Calu3 (cell line): ENCODE measurements at regions of chr6 and their contacts with region 1.

Region 1: DNA sequence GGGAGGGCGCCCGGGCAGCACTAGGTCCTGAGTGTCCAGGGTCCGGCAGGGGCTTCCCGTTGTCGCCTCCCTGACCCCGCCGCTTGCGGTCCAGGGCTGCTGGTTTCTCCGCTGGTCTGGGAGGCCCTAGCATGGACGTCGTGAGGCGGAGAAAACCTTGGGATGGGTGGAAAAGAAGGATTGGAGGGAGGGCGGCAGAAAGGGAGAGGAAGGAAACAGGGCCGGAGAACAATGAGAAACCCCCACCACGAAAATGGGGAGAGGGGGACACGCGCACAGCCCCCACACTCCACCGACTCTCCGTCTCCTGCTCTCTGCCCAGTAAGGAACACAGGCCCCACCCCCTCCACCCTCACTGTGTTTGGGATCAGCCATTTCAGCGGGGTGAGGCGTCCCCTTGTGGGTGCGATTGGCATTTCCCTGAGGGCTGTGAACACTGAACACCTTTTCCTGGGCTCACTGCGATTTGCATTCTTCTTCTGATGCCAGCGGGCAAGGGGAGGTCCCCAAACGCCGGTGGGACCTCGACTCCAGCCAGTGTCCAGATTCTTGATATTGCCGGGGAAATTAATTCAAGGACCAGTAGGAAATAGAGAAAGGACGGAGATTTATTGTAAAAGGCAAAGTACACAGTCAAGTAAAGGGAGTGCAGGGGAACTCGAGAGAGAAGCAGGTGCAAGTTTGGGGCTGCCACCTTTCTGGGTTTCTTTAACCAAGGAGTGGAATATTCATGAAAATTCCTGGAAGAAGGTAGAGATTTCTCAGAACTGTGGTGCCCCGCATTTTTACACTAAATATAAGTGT is 3.3 kb upstream of the RAET1G start:
- DNase-seq: peak; percentile 91
- H3K4me3 Mint-ChIP-seq: peak overlapping the region; percentile 67
- H3K27ac Mint-ChIP-seq: no peak overlapping the region
- H3K4me1 Mint-ChIP-seq: peaks cover 7% of the 10 kb centered on the region
- H3K27me3 Mint-ChIP-seq: peaks cover 35% of the 10 kb centered on the region
- CTCF ChIP-seq: peak; percentile 66

Region 2: DNA sequence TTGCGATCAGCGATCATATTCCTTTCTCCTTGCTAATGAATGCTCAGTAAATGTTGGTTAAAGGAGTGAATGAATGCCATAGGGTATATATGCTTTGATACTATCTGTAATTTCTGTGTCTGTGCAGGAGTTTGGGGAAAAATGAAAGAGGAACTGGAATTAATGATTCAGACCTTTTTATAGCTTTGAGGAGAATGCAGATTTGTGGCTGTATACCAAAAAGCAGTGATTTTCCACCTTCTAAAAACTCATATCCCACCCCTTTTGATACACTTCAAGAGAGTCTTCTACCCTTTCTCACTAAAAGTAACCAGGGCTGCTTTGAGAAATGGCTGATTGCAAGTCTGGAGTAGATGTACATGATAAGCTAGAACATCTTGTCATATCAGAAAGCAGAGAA is 552.7 kb before region 1 on chr6:
- CTCF ChIA-PET with region 1: no interaction called
- intact Hi-C with region 1: no loop called
- DNase-seq: no peak
- H3K4me3 Mint-ChIP-seq: no peak overlapping the region
- H3K27ac Mint-ChIP-seq: no peak overlapping the region
- H3K4me1 Mint-ChIP-seq: peaks cover 8% of the 10 kb centered on the region
- H3K27me3 Mint-ChIP-seq: no peaks in the 10 kb centered on the region
- CTCF ChIP-seq: no peak

Region 3: DNA sequence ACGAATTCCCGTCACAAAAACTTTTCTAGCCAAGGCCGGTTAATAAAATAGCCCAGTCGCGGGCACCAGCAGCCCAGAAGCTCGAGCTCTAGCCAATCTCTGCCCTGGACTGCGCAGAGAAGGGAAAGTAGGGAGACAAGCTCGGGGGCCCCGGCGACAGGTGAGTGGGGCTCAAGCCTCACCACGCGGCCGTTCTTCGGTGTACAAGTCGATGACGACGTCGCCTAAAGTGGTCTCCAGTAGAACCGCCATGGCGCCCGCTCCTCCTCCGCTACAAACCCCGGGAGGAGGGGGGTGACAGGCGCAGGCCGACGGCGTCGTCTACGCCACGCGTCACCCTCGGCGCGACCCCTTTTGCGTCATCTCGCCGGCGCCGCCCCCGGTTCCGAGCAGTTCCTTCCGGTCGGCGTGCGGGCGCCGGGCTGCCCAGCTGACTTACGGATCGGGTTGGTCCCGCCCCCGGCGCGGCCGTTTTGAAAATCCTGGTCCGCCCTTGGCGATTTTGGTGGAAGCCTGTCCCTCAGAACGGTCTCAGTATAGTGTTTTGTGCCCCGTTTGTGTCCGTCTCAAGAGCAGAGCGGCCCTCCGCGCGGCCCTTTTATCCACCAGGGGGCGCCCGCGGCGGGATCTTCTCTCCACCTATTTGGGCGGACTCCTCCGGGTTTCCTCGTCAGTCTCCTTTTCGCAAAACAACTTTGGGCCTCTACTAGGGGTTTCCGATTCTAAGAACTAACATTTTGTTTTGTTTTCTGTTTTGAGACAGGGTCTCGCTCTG is 380.2 kb before region 1 on chr6 and contains the start of gene PPIL4:
- CTCF ChIA-PET with region 1: no interaction called
- intact Hi-C with region 1: loop called (anchors 10 kb)
- DNase-seq: peak; percentile 93
- H3K4me3 Mint-ChIP-seq: peak within 1 kb of the TSS; percentile 84
- H3K27ac Mint-ChIP-seq: peak within 1 kb of the TSS; percentile 90
- H3K4me1 Mint-ChIP-seq: peaks cover 10% of the 10 kb centered on the region
- H3K27me3 Mint-ChIP-seq: peaks cover 13% of the 10 kb centered on the region
- CTCF ChIP-seq: peak; percentile 82
- total RNA-seq, gene PPIL4: 21.5 and 22.6 TPM in 2 replicates

Region 4: GRCh38 chr6:149723771-149724417 is 202.3 kb before region 1 on chr6:
- CTCF ChIA-PET with region 1: no interaction called
- intact Hi-C with region 1: loop called (anchors 5 kb)
- DNase-seq: peak; percentile 32
- H3K4me3 Mint-ChIP-seq: no peak overlapping the region
- H3K27ac Mint-ChIP-seq: no peak overlapping the region
- H3K4me1 Mint-ChIP-seq: no peaks in the 10 kb centered on the region
- H3K27me3 Mint-ChIP-seq: no peaks in the 10 kb centered on the region
- CTCF ChIP-seq: peak; percentile 62

Region 5: DNA sequence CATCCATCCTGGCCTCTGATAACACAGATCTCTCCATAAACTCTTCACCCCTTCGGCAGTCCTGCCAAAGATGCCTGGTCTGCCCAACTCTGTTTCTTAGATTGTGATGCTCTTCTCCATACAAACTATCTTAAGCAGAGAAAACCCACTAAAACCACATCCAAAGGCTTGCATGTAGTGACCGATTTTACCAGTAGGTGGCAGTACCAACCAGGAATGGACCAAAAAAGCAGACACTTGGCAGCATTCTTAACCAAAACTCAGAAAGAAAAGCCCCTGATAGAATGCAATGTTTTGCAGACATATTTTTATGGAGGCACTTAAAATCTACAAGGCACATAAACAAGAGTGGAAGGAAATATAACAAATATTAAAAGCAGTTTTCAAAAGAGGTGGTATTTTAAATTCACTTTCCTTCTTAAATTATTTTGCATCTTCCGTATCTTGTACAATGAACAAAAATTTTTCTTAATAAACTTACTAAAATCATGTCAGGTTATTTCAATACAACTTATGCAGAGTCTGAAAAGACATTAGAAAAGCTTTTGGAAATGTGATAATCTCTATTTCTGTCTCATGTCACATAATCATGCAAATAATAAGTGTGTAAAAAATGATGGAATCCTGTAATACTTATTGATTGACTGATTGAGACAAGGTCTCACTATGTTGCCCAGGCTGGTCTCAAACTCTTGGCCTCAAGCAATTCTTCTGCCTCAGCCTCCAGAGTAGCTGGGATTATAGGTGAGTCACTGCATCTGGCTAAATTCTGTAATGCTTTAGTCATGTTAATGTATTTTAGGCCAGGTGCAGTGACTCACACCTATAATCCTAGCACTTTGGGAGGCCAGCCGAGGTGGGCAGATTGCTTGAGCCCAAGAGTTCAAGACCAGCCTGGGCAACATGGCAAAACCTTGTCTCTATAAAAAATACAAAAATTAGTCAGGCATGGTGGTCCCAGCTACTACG is 91.4 kb before region 1 on chr6:
- CTCF ChIA-PET with region 1: no interaction called
- intact Hi-C with region 1: loop called (anchors 1 kb)
- DNase-seq: peak; percentile 70
- H3K4me3 Mint-ChIP-seq: no peak overlapping the region
- H3K27ac Mint-ChIP-seq: no peak overlapping the region
- H3K4me1 Mint-ChIP-seq: no peaks in the 10 kb centered on the region
- H3K27me3 Mint-ChIP-seq: no peaks in the 10 kb centered on the region
- CTCF ChIP-seq: peak; percentile 72

Region 6: DNA sequence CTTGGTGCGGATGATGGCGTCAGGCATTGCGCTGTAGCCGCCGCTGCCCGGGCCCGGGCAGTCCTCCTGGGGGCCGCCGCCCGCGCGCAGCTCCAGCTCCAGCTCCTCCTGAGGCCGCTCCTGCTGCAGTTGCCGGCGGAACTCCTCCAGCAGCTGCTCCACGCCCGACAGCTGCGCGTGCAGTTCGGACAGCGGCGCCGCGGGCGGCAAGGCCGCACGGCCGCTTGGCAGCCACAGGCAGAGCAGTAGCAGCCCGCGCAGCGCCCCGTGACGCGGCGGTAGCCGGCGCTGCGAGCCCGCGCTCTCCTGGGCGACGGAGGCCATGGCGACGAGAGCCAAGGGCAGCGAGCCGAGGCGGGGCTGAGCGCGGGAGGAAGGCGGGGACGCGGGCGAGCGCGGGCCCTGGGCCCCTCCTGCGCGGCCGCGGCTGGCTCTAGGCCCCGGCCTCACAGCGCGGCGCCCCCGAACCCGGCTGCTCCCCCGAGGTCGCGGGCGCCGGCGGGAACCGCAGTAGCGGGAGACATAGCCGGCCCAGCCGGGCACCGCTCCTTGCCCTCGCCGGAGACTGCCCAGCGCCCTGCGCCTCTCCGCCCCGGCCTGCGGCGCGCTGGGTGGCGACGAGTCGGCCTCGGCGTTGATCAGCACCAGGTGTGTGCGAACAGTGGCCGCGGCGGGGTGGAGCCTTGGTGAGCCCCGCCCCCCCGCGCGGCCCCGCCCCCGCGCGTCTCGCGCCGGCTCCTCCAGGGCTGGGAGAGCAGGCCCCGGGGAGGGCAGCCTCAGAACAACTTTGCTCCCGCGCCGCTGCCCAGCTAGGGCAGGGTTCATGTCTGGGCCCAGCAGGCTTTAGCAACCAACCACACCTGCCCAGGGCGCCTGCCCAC is 62.2 kb before region 1 on chr6 and contains the start of gene LRP11:
- CTCF ChIA-PET with region 1: interaction called, 3 read pairs
- intact Hi-C with region 1: loop called (anchors 10 kb)
- DNase-seq: peak; percentile 88
- H3K4me3 Mint-ChIP-seq: peak within 1 kb of the TSS; percentile 80
- H3K27ac Mint-ChIP-seq: peak within 1 kb of the TSS; percentile 82
- H3K4me1 Mint-ChIP-seq: peaks cover 38% of the 10 kb centered on the region
- H3K27me3 Mint-ChIP-seq: no peaks in the 10 kb centered on the region
- CTCF ChIP-seq: no peak
- total RNA-seq, gene LRP11: 27.4 and 31.1 TPM in 2 replicates

Region 7: DNA sequence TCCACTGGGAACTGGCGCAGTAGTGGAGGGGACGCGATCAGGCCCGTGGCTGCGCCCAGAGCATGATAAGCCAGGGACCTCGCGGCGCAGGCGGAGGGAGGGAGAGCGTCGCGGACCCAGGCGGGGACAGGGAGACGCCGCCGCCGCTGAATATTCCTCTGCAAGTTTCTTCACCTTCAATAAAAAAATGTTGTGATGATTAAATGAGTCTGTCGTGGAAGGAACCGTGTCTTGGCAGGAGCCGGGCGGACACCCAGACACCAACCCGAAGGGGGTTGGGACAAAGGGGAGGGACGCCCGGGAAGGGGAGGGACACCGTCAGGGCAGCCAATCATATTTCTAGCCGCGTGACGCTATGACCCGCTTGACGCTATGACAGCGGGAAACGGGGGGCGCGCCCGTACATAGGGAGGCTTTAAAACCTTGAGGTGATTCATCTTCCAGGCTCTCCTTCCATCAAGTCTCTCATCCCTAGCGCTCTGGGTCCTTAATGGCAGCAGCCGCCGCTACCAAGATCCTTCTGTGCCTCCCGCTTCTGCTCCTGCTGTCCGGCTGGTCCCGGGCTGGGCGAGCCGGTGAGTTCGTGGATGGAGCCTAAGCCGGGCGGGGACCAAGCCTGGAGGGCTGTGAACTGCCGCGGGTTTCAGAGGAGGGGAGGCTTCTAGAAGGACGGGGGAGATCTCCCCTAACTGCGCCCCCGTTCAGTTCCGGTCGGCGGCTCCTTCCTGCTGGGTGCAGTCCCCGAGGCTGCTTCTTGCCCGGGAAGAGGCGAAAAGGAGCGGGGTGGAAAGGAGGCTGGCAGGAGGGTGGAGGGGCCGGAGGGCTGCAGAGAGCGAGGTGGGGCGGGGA is 15.6 kb after region 1 on chr6 and contains the start of gene ULBP2:
- CTCF ChIA-PET with region 1: no interaction called
- intact Hi-C with region 1: no loop called
- DNase-seq: peak; percentile 75
- H3K4me3 Mint-ChIP-seq: peak within 1 kb of the TSS; percentile 81
- H3K27ac Mint-ChIP-seq: no peak within 1 kb of the TSS
- H3K4me1 Mint-ChIP-seq: peaks cover 10% of the 10 kb centered on the region
- H3K27me3 Mint-ChIP-seq: peaks cover 36% of the 10 kb centered on the region
- CTCF ChIP-seq: no peak
- total RNA-seq, gene ULBP2: 7.1 and 7.6 TPM in 2 replicates